ENCODE measurements at regions of chr3 and their contacts with region 1.

Region 1: DNA sequence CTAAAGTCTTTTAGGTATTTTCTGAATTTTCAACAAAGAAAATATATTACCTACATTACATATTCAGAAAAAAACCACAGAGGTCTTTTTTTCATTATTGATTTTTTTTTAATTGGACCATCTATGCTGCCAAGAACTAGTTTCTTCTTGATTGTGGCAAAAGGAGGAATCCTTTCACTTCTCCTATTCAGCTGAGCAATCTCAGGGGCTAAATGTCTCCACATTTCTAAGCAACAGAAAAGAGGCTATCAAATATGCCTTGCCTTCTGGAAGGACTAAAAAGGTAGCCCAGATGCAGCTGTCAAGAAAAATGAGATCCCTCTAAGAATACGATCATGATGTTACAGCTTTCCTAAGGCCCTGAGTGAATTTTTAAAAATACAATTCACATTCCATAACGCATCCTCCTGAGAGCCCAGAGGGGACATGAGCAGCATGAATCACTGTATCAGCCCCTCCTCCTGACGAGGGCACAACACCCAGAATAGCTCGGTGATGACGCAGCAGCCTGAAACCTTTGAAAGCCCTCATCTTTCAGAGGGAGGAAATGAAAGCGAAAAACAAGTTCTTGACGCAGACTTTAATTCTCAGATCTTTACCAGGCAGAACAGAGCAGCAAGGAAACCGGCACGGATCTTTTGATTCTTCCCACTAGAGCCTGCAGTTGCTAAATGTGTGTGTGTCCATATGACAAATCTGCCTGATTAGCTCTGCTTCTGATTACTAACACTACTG is 24.6 kb downstream of the RUBCN start:
- DNase-seq: peak; percentile 78
- H3K4me3 Mint-ChIP-seq: peak overlapping the region; percentile 70
- H3K27ac Mint-ChIP-seq: peak overlapping the region; percentile 92
- H3K4me1 Mint-ChIP-seq: peaks cover 32% of the 10 kb centered on the region
- H3K27me3 Mint-ChIP-seq: no peaks in the 10 kb centered on the region

Region 2: DNA sequence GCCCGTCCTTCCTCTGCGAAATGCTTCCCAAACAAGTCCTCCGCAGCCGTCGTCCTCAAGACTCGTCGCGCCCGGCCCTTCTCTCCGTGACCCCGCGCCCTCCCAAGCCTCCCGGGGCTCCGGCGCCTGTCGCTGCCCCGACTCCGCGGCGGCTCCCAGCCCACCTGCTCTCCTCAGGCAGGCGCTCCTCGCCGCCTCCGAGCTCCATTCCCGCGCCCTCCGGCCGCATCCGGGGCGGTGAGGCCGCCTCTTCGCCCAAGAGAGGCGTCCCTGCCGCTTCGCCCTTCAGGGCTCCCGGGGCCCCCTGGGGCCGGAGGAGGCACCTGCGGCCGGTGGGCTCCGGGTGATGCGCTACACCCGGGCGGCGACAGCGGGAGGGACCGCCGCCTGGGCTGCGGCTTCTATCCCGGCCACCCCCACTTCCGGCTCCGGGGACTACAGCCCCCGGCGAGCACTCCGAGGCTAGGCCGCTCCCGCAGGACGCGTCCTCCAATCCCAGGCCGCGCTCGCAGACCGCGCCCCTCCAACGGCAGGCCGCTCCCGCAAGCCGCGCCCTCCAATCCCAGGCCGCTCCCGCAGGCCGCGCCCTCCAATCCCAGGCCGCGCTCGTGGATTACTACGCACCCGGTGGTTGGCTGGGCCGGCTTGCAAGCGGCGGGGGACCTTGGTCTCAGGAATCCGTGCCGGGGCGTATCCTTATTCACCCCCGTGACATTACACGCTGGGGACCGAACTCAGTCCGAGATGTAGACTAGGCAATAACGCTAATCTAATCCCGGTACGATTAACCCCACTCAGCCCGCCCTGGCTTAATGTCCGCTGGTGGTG is 24.6 kb after region 1 on chr3 and contains the start of gene RUBCN:
- intact Hi-C with region 1: loop called (anchors 1 kb)
- DNase-seq: peak; percentile 94
- H3K4me3 Mint-ChIP-seq: peak within 1 kb of the TSS; percentile 90
- H3K27ac Mint-ChIP-seq: peak within 1 kb of the TSS; percentile 95
- H3K4me1 Mint-ChIP-seq: peaks cover 36% of the 10 kb centered on the region
- H3K27me3 Mint-ChIP-seq: peaks cover 4% of the 10 kb centered on the region
- total RNA-seq, gene RUBCN: 44.7 and 45.2 TPM in 2 replicates

Measured in activated T-helper 1 cell treated with anti-CD3 and anti-CD28 coated beads, Interleukin-12 subunit alpha, Interleukin-12 subunit beta, Interleukin-2, Interleukin-4 antibody, amounts not matched to agents 30 ng/mL and 10 ng/mL and 1 ng/mL, durations not matched to agents 14 hours and 24 hours and 36 hours (primary cell).